ENCODE measurements at regions of chr11 and their contacts with region 1.

Region 1: DNA sequence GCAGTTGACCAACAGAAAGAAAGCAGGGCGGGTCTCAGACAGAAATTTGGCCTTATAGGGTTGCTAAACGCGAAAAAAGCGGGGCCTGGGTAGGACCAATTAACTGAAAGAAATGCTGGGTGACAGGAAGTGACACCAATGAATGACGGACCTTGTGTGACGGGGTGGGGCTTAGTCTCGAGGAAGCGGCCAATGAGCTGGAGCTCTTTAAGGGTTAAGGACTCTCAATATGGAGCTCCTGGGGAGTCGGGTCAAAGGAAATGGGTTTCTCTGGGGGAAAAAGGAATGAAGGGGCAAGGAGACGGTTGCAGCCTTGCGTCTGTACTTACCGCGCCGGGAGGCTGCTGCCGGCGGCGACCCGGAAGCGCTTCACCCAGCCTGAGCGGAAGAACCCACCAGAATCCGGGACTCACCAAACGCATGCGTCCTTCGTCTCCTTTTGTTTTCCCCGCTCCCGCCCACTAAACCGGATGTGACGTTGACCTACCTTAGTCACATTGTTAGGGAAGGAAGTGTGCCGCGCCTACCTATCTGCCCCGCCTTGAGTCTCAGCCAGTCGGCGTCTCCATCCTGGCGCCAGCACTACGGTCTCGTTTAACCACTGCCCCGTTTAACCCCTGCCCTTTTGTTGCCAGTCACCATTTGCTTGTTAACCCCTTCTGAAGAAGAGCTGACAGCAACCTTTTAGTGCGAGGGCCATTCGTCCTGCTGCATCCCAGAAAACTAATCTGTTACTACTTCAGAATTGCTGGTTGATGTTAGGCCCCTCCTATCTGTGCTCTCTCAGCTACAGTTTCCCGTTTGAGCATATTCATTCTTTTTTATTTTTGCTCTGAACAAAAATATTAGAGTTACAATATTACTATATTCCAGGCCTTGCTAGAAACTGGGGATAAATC is at the start of gene ANAPC15:
- DNase-seq: peak; percentile 99
- H3K4me3 ChIP-seq: peak within 1 kb of the TSS; percentile 46 to 66
- H3K27ac ChIP-seq: peak within 1 kb of the TSS; percentile 99
- H3K4me1 ChIP-seq: peaks cover 4% of the 10 kb centered on the region
- H3K27me3 ChIP-seq: no peaks in the 10 kb centered on the region
- CTCF ChIP-seq: peak in 2 of 4 experiments; percentile 28 to 38
- POLR2A ChIP-seq: peak; percentile 97
- total RNA-seq, gene ANAPC15: 28.9 to 54.2 TPM

Region 2: DNA sequence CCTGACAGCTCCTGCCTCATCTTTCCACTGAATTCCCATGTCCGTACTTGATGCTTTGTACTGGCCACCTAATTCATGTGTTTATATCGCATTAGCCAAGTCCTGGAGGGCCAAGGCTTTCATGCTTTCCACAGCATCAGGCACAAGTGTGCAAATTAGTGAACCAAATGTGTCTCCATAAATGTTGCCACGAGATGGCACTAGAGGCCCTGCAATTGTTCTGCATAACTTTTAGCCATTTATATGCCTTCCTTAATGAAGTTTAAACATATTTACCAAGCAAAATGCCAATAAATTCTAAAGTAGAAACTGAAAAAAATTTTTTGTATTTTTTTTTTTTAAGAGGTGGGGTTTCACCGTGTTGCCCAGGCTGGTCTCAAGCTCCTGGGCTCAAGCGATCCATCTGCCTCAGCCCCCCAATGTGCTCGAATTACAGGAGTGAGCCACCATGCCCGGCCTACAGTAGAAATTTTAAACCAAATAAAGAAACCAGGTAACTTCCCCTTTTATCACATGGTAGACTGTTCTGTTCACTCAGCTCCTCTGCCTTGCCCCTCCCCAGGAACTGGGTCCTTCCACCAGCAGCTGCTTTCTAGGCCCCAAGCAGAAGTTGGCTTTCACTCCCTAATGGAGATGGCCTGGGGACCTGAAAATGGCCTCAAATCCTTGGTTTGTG is 134.7 kb before region 1 on chr11:
- intact Hi-C with region 1: no loop called
- DNase-seq: peak; percentile 52
- H3K4me3 ChIP-seq: no peak overlapping the region
- H3K27ac ChIP-seq: no peak overlapping the region
- H3K4me1 ChIP-seq: no peaks in the 10 kb centered on the region
- H3K27me3 ChIP-seq: no peaks in the 10 kb centered on the region
- CTCF ChIP-seq: peak in 3 of 4 experiments; percentile 66 to 81 (median 81)
- POLR2A ChIP-seq: no peak

Region 3: DNA sequence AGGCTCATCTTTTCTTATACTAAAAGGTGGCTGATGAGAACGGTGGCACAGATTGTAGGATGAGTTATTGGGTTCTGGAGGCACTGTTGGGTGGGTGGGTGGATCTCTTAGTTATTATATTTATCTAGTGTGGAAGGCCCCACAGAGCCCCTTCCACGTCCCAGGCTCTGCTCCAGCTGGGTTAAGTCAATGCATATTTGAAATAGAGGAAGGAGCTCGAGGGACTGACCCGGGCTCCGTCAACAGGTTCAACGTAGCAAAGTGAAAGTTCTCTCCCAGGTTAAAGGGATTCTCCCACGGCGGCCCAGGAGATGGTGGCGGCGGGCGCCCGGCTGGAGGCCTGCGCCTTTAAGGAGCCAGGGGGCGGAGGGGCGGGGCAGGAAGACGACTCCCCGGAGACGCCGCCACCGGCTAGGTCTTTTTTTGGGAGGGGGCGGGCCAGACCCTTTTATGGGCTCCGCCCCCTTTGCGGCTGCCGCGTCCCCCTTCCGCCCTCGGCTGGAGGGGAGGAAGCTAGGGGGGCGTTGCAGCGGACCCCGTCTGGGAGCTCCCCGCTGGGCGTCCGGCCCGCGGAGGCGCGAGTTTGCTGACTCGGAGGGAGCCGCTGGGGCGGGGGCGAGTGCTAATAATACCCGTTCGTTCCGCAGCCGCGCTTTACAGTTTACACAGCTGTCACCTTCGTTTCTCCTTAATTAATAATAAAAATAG is 110.5 kb after region 1 on chr11:
- intact Hi-C with region 1: loop called (anchors 2 kb)
- DNase-seq: peak; percentile 94
- H3K4me3 ChIP-seq: peak overlapping the region; percentile 85 to 86
- H3K27ac ChIP-seq: peak overlapping the region; percentile 98 to 99
- H3K4me1 ChIP-seq: peaks cover 8% of the 10 kb centered on the region
- H3K27me3 ChIP-seq: no peaks in the 10 kb centered on the region
- CTCF ChIP-seq: peak in 3 of 4 experiments; percentile 46 to 69 (median 65)
- POLR2A ChIP-seq: peak; percentile 72

Region 4: DNA sequence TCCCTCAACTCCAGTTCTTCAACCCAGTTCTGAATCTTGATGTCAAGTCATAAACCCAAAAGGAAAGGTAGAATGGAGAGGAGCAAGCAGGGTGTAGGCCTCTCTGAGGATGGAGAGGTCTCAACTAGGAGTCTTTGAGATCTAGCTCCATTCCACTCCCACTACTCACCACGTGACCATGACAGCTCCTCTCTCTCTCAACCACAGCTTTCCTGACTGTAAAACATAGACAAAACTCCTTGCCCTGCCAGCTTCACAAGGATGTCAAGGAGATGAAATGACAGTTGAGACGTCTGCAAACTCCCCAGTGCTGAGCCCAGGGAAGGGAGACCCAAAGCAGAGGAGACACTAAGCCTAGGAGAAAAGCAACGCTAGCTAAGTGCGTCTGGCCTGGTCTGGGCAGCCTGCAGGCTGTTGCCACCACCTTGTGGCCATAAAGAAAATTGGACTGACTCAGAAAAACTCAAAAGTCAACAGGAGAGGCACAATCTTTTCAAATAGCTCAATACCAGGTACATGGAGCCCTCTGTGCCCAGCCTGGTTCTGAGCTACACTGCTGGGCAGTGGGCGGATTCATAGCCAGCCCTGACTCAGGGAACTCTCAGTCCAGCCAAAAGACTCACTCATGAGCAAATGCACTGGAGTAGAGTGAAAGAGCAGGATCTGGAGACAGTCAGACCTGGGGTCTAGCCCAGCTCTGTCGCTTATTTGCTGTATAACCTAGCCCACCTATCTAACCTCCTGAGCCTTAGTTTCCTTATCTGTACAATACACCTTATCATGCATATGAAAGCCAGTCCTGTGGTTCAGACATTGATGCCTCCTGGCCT is 318.4 kb after region 1 on chr11:
- intact Hi-C with region 1: loop called (anchors 10 kb)
- DNase-seq: peak; percentile 38
- H3K4me3 ChIP-seq: no peak overlapping the region
- H3K27ac ChIP-seq: no peak overlapping the region
- H3K4me1 ChIP-seq: no peaks in the 10 kb centered on the region
- H3K27me3 ChIP-seq: no peaks in the 10 kb centered on the region
- CTCF ChIP-seq: peak; percentile 36 to 81 (median 70)
- POLR2A ChIP-seq: no peak

Measured in prostate gland (tissue), 2 donors.